AG04449 (cell line): ENCODE measurements at regions of chr11 and their contacts with region 1.

Region 1: GRCh38 chr11:8033305-8034105 is 46.4 kb downstream of the EIF3F start:
- DNase-seq: no peak
- H3K4me3 ChIP-seq: no peak overlapping the region
- CTCF ChIP-seq: peak; percentile 90

Region 2: DNA sequence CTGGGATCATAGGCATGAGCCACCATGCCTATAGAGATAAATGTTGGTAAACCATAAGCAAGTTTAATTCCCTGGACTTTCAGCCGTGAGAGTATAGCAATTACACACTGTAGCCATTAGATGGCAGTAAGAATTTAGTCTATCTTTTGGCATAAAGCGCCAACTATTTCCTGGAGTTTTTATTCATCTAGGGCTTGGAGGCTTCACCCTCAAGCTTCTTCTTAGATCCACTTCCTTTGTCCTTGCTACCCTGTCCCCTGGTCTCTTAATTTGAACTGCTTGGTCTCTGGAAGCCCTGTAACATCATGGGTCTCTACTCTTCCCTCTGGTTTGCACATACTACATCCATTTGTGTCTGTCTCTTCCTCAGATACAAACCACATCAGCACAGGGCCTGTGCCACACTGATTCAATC is 140.7 kb before region 1 on chr11:
- CTCF ChIA-PET with region 1: interaction called, 10 read pairs
- POLR2A ChIA-PET with region 1: no interaction called
- DNase-seq: peak; percentile 28
- H3K4me3 ChIP-seq: no peak overlapping the region
- CTCF ChIP-seq: peak; percentile 56

Region 3: GRCh38 chr11:8018484-8019313 is 14.8 kb before region 1 on chr11:
- CTCF ChIA-PET with region 1: interaction called, 144 read pairs
- POLR2A ChIA-PET with region 1: no interaction called
- DNase-seq: no peak
- H3K4me3 ChIP-seq: peak overlapping the region; percentile 67
- CTCF ChIP-seq: no peak

Region 4: DNA sequence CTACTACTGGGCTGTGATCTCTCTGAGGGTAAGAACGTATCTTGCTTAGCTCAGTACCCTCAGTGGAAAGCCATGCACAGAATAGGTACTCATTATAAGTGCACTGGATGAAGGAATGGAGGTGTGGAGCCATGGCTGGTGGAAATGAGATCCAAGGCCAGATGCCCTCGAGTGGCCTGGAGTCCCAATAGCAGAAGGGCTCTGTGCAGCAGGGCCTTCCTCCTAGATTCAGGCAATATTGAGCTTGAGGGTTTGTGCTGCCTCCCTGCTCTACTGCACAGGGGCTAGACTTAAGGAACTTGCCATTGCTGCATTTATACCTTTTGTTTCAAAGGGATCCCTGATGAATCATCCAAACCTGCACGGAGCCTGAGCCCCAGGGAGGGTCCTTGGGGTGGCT is 13.9 kb after region 1 on chr11:
- CTCF ChIA-PET with region 1: interaction called, 150 read pairs
- POLR2A ChIA-PET with region 1: no interaction called
- DNase-seq: no peak
- H3K4me3 ChIP-seq: no peak overlapping the region
- CTCF ChIP-seq: no peak

Region 5: DNA sequence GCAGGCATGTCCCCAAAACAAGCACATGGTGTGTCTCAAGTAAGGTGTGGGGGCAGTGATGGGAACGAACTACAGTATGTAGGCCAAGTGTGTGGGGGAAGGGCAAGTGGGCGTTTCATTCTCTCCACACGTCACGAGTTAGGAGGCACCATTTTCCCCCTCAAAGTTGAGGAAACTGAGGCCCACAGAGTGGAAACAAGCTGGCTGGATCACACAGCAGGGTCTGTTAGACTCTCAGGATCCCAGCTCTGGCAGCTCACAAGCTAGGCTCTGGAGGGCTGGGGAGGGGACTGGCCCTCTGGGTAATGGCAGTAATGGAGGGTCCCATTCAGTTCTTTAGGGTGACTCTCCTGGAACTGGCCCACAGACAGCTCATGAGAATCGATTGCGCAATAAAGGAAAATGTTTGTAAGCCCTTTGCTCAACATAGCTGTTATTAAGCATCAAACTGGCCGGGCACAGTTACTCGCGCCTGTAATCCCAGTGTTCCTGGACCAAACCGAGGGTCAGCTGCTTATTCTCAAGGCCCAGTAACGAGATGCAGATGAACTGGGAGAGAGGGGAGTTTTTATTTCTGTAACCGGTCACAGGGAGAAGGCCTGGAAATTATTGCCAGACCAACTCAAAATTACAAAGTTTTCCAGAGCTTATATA is 23.4 kb after region 1 on chr11:
- CTCF ChIA-PET with region 1: interaction called, 150 read pairs
- POLR2A ChIA-PET with region 1: no interaction called
- DNase-seq: peak; percentile 29
- H3K4me3 ChIP-seq: no peak overlapping the region
- CTCF ChIP-seq: no peak

Region 6: GRCh38 chr11:8070417-8071115 is 37.1 kb after region 1 on chr11:
- CTCF ChIA-PET with region 1: interaction called, 66 read pairs
- POLR2A ChIA-PET with region 1: no interaction called
- DNase-seq: no peak
- H3K4me3 ChIP-seq: no peak overlapping the region
- CTCF ChIP-seq: peak; percentile 23

Region 7: DNA sequence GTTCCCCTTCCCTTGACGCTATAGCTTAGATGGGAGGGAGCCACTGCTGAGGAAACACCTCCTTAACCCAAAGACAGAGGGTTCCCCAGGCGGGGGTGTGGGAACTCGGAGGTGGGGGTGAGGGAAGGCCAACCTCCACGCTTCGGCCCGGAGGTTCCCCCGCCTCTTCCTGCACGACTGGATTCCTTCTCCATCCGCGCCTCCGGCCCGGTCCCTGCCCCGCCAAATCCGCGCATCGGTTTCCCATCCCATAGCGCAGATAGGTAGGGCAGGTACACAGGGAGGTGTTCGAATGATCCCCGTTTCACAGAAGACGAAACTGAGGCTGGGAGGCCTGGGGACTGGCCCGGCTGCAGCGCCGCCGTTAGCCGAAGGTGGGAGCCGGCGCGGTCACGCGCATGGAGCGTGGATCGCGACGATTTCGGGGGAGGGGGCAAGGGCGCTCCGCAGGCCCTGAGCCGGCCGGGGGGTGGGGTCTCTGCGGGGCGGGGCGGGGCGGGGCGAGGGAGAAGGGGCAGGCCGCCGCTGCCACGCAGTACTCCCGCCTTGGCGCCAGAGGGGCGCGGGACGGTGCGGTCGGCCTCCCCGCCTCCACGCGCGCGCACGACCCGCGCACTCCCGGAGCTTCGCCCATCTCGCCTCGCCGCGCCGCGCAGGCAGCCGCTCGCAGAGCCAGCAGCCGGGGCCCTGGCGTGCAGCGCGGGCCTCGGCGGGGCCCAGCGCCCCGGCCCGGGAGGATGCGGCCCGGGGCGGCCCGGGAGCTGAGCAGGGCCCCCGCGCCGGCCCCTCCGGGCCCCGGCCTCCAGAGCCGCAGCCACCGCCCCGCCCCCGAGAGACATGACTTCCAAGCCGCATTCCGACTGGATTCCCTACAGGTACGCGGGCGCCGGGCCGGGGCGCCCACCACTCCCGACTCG is 47.4 kb after region 1 on chr11 and contains the start of gene TUB:
- CTCF ChIA-PET with region 1: interaction called, 694 read pairs
- POLR2A ChIA-PET with region 1: no interaction called
- DNase-seq: no peak
- H3K4me3 ChIP-seq: peak within 1 kb of the TSS; percentile 67
- CTCF ChIP-seq: no peak